ENCODE measurements at regions of chr1 and their contacts with region 1.

Region 1: DNA sequence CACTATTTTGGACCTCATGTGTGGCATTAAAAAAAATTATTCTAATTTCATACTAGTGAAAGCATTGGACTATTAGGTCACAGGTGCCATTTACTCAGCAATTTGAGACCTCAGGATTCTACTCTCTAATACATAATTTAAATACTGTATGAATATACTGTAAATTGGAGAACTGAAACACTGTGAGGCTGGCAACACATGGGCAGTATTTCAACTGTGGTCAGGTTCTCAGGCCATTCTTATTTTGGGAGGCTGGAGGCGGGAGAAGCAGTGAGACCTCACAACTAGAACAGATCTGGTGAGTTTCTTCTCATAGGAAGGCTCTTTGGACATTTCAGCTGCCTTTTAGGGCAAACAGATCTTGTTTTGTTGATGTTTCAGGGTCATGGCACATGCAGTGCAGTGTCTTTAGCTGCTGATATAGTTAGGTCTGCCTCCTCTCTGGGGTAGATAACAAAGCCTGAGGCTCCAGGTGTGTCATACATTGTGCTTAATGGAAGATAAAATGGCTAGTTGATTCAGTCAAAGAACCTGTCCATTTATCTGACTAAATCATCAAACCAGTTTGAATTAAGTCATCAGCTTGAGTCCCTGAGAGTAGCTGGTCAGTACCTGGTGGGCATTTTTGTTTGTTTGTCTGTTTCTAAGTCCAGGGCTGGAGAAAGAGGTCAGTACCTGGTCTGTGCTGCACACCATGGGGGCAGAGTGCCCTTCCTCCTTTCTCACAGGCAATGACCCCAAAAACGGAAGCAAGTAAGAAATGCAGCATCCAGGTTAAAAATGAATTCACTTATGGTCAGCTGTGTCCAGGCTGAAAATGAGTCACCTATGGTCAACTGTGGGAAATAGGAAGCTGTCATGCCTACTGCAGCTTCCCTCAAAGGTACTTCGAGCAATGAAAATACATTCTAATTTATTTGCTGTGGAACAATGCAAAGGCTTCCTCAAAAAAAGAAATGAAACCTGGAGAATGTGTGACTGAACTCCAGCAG is 216.2 kb downstream of the SDCCAG8 start:
- DNase-seq: no peak
- ATAC-seq: peak in 2 of 4 donors; percentile 31 to 74
- H3K4me3 ChIP-seq: no peak overlapping the region
- H3K27ac ChIP-seq: no peak overlapping the region
- H3K4me1 ChIP-seq: no peaks in the 10 kb centered on the region
- H3K27me3 ChIP-seq: no peaks in the 10 kb centered on the region
- CTCF ChIP-seq: no peak

Region 2: GRCh38 chr1:243354511-243355153 is 117.4 kb before region 1 on chr1:
- intact Hi-C with region 1: no loop called
- DNase-seq: no peak
- ATAC-seq: peak in 3 of 4 donors; percentile 56 to 71 (median 61)
- H3K4me3 ChIP-seq: no peak overlapping the region
- H3K27ac ChIP-seq: no peak overlapping the region
- H3K4me1 ChIP-seq: no peaks in the 10 kb centered on the region
- H3K27me3 ChIP-seq: no peaks in the 10 kb centered on the region
- CTCF ChIP-seq: no peak

Region 3: DNA sequence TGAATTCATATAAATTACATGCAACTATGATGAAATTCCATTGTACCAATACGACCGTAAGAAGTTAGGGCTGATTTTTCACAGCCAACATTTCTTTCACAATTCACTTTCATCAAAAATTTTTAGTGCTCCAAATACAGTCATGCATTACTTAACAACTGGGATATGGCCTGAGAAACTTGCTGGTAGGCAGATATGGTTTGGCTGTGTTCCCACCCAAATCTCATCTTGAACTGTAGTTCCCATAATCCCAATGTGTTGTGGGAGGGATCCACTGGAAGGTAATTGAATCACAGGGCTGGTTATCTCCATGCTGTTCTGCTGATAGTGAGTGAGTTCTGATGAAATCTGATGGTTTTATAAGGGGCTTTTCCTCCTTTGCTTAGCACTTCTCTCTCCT is 133.6 kb after region 1 on chr1:
- intact Hi-C with region 1: loop called in 1 of 3 experiments (anchors 5 kb)
- DNase-seq: no peak
- ATAC-seq: no peak
- H3K4me3 ChIP-seq: no peak overlapping the region
- H3K27ac ChIP-seq: no peak overlapping the region
- H3K4me1 ChIP-seq: no peaks in the 10 kb centered on the region
- H3K27me3 ChIP-seq: no peaks in the 10 kb centered on the region
- CTCF ChIP-seq: no peak